ENCODE measurements at regions of chr1 and their contacts with region 1.

Region 1: DNA sequence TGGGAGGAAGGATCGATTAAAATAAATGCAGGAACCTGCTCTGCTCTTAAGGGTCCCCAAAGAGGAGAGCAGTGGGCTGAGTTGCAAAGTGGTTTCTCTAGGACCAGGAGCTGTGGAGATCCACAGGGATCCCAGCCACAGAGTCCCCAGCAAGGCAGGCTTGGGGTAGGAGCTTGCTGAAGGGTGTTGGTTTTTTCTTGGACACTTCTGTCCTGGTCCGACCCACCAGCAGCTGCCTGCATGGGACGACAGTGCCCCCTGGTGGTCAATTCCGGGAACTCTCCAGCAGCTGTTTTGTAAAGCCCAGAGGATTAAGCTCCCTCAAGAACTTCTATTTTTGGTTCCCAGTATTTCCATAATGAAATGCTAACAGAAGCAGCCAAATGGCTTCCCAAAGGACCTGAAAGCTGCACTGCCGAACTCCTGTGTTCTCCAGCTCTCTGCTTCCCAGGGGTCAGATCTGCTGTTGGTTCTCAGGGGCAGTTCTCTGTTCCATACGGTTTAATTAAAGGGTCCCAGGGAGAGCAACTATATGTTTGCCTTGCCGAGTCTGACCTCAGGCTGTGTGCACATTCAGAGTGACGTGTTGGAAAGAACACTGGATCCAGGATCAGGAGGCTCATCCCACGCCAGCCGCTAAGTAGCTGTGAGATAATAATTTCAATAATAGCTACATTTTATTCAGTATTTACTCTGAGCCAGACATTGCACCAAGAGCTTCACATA is 23.2 kb downstream of the NENF start:
- DNase-seq: peak; percentile 88
- H3K4me3 Mint-ChIP-seq: no peak overlapping the region
- H3K27ac Mint-ChIP-seq: no peak overlapping the region
- H3K4me1 Mint-ChIP-seq: no peaks in the 10 kb centered on the region
- H3K27me3 Mint-ChIP-seq: no peaks in the 10 kb centered on the region
- CTCF ChIP-seq: peak; percentile 100

Region 2: GRCh38 chr1:211393203-211393602 is 1062.8 kb before region 1 on chr1:
- CTCF ChIA-PET with region 1: no interaction called
- POLR2A ChIA-PET with region 1: no interaction called
- intact Hi-C with region 1: no loop called
- DNase-seq: no peak
- H3K4me3 Mint-ChIP-seq: no peak overlapping the region
- H3K27ac Mint-ChIP-seq: no peak overlapping the region
- H3K4me1 Mint-ChIP-seq: no peaks in the 10 kb centered on the region
- H3K27me3 Mint-ChIP-seq: no peaks in the 10 kb centered on the region
- CTCF ChIP-seq: no peak

Region 3: DNA sequence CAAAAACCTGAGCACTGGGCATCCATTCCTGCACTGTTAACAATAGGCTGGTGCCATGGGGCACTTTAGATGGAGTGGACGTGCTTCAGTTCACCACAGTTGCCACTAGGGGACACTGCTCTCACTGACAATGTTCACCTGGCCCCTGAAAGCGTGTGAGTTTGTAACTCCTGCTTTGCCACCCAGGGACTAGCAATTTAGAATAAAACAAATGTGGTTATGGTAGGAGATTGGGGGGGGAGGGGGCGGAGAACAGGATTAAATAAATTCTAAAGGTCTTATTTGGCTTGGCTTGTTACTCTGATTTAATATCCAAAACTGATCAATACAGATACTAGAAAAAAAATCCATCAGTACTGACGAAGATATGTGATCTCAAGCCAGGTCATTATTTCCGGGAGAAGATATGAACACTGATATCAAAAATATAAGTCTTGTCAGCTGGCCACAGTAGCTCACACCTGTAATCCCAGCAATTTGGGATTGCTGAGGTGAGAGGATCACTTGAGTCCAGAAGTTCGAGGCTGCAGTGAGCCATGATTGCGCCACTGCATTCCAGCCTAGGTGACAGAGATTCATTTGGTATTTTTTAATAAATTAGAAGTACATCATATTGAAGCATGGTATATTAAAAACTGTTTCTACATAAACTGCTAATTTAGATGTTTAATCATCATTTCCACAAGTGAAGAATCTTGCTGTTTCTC is 443.8 kb before region 1 on chr1:
- CTCF ChIA-PET with region 1: interaction called, 51 read pairs
- POLR2A ChIA-PET with region 1: no interaction called
- intact Hi-C with region 1: loop called (anchors 1 kb)
- DNase-seq: peak; percentile 95
- H3K4me3 Mint-ChIP-seq: no peak overlapping the region
- H3K27ac Mint-ChIP-seq: no peak overlapping the region
- H3K4me1 Mint-ChIP-seq: no peaks in the 10 kb centered on the region
- H3K27me3 Mint-ChIP-seq: no peaks in the 10 kb centered on the region
- CTCF ChIP-seq: peak; percentile 100

Region 4: GRCh38 chr1:212089560-212090163 is 366.3 kb before region 1 on chr1:
- CTCF ChIA-PET with region 1: interaction called, 10 read pairs
- POLR2A ChIA-PET with region 1: no interaction called
- intact Hi-C with region 1: no loop called
- DNase-seq: no peak
- H3K4me3 Mint-ChIP-seq: no peak overlapping the region
- H3K27ac Mint-ChIP-seq: no peak overlapping the region
- H3K4me1 Mint-ChIP-seq: peaks cover 8% of the 10 kb centered on the region
- H3K27me3 Mint-ChIP-seq: no peaks in the 10 kb centered on the region
- CTCF ChIP-seq: no peak

Region 5: GRCh38 chr1:212368073-212368484 is 87.9 kb before region 1 on chr1:
- CTCF ChIA-PET with region 1: interaction called, 222 read pairs
- POLR2A ChIA-PET with region 1: interaction called, 12 read pairs
- intact Hi-C with region 1: loop called (anchors 1 kb)
- DNase-seq: peak; percentile 93
- H3K4me3 Mint-ChIP-seq: no peak overlapping the region
- H3K27ac Mint-ChIP-seq: peak overlapping the region; percentile 5
- H3K4me1 Mint-ChIP-seq: peaks cover 15% of the 10 kb centered on the region
- H3K27me3 Mint-ChIP-seq: no peaks in the 10 kb centered on the region
- CTCF ChIP-seq: peak; percentile 99

Region 6: GRCh38 chr1:212469701-212470458 is 13.9 kb after region 1 on chr1:
- CTCF ChIA-PET with region 1: interaction called, 250 read pairs
- POLR2A ChIA-PET with region 1: interaction called, 4 read pairs
- intact Hi-C with region 1: no loop called
- DNase-seq: peak; percentile 96
- H3K4me3 Mint-ChIP-seq: peak overlapping the region; percentile 49
- H3K27ac Mint-ChIP-seq: peak overlapping the region; percentile 90
- H3K4me1 Mint-ChIP-seq: peaks cover 10% of the 10 kb centered on the region
- H3K27me3 Mint-ChIP-seq: no peaks in the 10 kb centered on the region
- CTCF ChIP-seq: no peak

Region 7: GRCh38 chr1:212749821-212750535 is 294.0 kb after region 1 on chr1:
- CTCF ChIA-PET with region 1: interaction called, 30 read pairs
- POLR2A ChIA-PET with region 1: interaction called, 3 read pairs
- intact Hi-C with region 1: no loop called
- DNase-seq: peak; percentile 90
- H3K4me3 Mint-ChIP-seq: peak overlapping the region; percentile 7
- H3K27ac Mint-ChIP-seq: peak overlapping the region; percentile 46
- H3K4me1 Mint-ChIP-seq: peaks cover 19% of the 10 kb centered on the region
- H3K27me3 Mint-ChIP-seq: no peaks in the 10 kb centered on the region
- CTCF ChIP-seq: peak; percentile 96

Measured in MCF 10A (cell line).